ENCODE measurements at regions of chr1 and their contacts with region 1.

Region 1: GRCh38 chr1:27321813-27322577 is at the start of gene TMEM222:
- DNase-seq: peak; percentile 94 to 99 (median 97)
- ATAC-seq: peak; percentile 98
- H3K4me3 ChIP-seq: peak within 1 kb of the TSS; percentile 91
- H3K4me3 Mint-ChIP-seq: peak within 1 kb of the TSS; percentile 91 to 99 (median 96)
- H3K27ac ChIP-seq: peak within 1 kb of the TSS; percentile 95
- H3K27ac Mint-ChIP-seq: peak within 1 kb of the TSS; percentile 88 to 97 (median 93)
- H3K4me1 ChIP-seq: peaks cover 18 to 22% of the 10 kb centered on the region in 2 donors
- H3K4me1 Mint-ChIP-seq: peaks cover 22 to 59% (median 54%) of the 10 kb centered on the region in 7 donors
- H3K27me3 ChIP-seq: no peaks in the 10 kb centered on the region
- H3K27me3 Mint-ChIP-seq: peaks cover 0 to 5% (median 3%) of the 10 kb centered on the region in 5 donors
- total RNA-seq, gene TMEM222: 23.7 to 44.0 (median 41.9) TPM

Region 2: DNA sequence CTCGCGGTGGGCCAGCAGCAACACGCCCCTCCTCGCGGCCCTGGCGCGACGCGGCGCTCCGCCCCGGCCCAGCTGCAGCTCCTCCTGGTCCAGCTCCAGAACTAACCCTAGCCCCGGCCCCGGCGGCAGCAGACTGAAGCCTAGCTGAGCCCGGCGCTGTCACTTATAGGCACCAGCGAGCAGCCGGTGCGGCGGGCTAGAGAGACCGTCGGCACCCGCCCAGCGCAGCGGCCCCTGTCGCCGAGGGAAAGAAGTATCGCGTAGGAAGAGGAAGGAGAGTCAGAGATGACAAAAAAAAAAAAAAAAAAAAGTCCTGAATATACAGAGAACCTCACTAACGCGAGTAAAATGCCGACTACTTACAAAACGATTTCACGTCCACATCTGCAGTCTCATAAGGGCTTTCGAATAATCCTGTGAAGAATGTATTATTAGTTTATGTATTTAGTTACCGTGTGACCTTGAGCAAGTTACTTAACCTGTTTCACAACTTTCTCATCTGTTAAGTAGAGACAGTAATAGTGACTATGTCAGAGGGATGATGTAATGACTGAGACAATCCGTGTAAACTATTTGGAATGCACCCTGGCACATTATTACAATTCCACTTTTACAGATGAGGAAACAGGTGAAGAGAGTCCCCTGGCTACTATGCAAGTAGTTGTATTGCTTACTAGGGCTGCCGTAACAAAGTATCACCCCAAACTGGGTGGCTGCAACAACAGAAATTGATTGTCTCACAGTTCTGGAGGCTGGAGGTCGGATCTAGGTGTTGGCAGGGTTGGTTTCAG is 166.8 kb before region 1 on chr1 and contains the start of gene SLC9A1:
- CTCF ChIA-PET with region 1: interaction called, 3 read pairs
- POLR2A ChIA-PET with region 1: no interaction called
- intact Hi-C with region 1: loop called (anchors 1 kb)
- DNase-seq: peak; percentile 90 to 96 (median 94)
- ATAC-seq: peak; percentile 98
- H3K4me3 ChIP-seq: peak within 1 kb of the TSS; percentile 40
- H3K4me3 Mint-ChIP-seq: peak within 1 kb of the TSS; percentile 82 to 97 (median 90)
- H3K27ac ChIP-seq: peak within 1 kb of the TSS; percentile 90
- H3K27ac Mint-ChIP-seq: peak within 1 kb of the TSS; percentile 96 to 100 (median 99)
- H3K4me1 ChIP-seq: peaks cover 29 to 36% of the 10 kb centered on the region in 2 donors
- H3K4me1 Mint-ChIP-seq: peaks cover 38 to 52% (median 49%) of the 10 kb centered on the region in 7 donors
- H3K27me3 ChIP-seq: no peaks in the 10 kb centered on the region
- H3K27me3 Mint-ChIP-seq: no peaks in the 10 kb centered on the region
- total RNA-seq, gene SLC9A1: 13.2 to 25.7 (median 21.1) TPM

Region 3: GRCh38 chr1:27307874-27308598 is 14.0 kb before region 1 on chr1:
- CTCF ChIA-PET with region 1: no interaction called
- POLR2A ChIA-PET with region 1: interaction called, 10 read pairs
- intact Hi-C with region 1: no loop called
- DNase-seq: no peak
- ATAC-seq: no peak
- H3K4me3 ChIP-seq: no peak overlapping the region
- H3K4me3 Mint-ChIP-seq: no peak overlapping the region
- H3K27ac ChIP-seq: no peak overlapping the region
- H3K27ac Mint-ChIP-seq: peak overlapping the region in 1 of 9 donors; percentile 34
- H3K4me1 ChIP-seq: no peaks in the 10 kb centered on the region
- H3K4me1 Mint-ChIP-seq: peaks cover 0 to 2% (median 0%) of the 10 kb centered on the region in 7 donors
- H3K27me3 ChIP-seq: no peaks in the 10 kb centered on the region
- H3K27me3 Mint-ChIP-seq: peaks cover 0 to 3% (median 0%) of the 10 kb centered on the region in 5 donors

Region 4: DNA sequence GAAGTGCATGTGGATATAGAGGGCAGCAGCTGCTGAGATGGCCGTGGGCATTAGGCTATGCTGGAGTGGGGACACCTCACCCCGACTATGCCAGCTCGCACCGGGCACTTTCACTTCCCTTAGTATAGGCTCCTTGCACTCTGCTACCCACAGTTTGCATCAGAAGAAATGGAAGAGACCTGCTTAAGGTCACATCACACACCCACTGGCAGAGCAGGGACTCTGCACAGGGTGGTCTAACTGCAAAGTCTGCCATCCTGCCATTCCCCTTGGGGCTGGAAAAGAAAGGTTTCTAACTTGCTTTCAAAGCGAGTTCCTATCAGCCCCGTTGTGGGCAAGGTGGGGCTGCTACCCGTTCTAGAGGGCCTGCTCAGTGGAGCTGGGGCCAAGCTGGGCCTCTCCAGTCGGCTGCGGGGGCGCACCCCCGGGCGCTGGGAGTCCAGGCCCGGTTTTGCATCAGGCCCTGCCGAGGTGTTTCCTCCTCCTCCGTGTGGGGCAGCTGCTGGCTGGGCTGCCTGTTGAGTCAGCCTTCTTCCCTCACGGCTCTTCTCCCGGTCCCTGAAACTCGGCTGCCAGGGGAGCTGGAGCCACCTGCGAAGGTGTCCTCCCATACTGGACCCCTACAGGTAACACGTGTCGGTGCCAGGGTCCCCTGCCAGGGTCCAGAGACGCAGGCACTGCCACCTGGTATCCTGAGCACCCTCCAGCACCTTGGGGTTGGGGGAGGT is 19.7 kb after region 1 on chr1 and contains the start of gene SYTL1:
- CTCF ChIA-PET with region 1: interaction called, 6 read pairs
- POLR2A ChIA-PET with region 1: interaction called, 28 read pairs
- intact Hi-C with region 1: loop called (anchors 1 kb)
- DNase-seq: peak; percentile 49 to 72 (median 60)
- ATAC-seq: peak; percentile 74
- H3K4me3 ChIP-seq: peak within 1 kb of the TSS; percentile 85
- H3K4me3 Mint-ChIP-seq: peak within 1 kb of the TSS; percentile 91 to 100 (median 96)
- H3K27ac ChIP-seq: peak within 1 kb of the TSS; percentile 87
- H3K27ac Mint-ChIP-seq: peak within 1 kb of the TSS; percentile 86 to 98 (median 94)
- H3K4me1 ChIP-seq: peaks cover 11 to 29% of the 10 kb centered on the region in 2 donors
- H3K4me1 Mint-ChIP-seq: peaks cover 22 to 68% (median 53%) of the 10 kb centered on the region in 7 donors
- H3K27me3 ChIP-seq: no peaks in the 10 kb centered on the region
- H3K27me3 Mint-ChIP-seq: no peaks in the 10 kb centered on the region
- total RNA-seq, gene SYTL1: 107 to 172 (median 136) TPM

Region 5: GRCh38 chr1:27365372-27366112 is 43.5 kb after region 1 on chr1:
- CTCF ChIA-PET with region 1: interaction called, 3 read pairs
- POLR2A ChIA-PET with region 1: interaction called, 7 read pairs
- intact Hi-C with region 1: loop called (anchors 1 kb)
- DNase-seq: peak; percentile 48 to 77 (median 67)
- ATAC-seq: peak; percentile 78
- H3K4me3 ChIP-seq: peak overlapping the region; percentile 61
- H3K4me3 Mint-ChIP-seq: peak overlapping the region; percentile 74 to 93 (median 88)
- H3K27ac ChIP-seq: peak overlapping the region; percentile 60
- H3K27ac Mint-ChIP-seq: peak overlapping the region; percentile 54 to 90 (median 73)
- H3K4me1 ChIP-seq: peaks cover 13 to 17% of the 10 kb centered on the region in 2 donors
- H3K4me1 Mint-ChIP-seq: peaks cover 21 to 55% (median 42%) of the 10 kb centered on the region in 7 donors
- H3K27me3 ChIP-seq: no peaks in the 10 kb centered on the region
- H3K27me3 Mint-ChIP-seq: no peaks in the 10 kb centered on the region

Region 6: GRCh38 chr1:27489910-27490741 is 168.1 kb after region 1 on chr1 and contains the start of gene WASF2:
- CTCF ChIA-PET with region 1: no interaction called
- POLR2A ChIA-PET with region 1: no interaction called
- intact Hi-C with region 1: loop called in 1 of 2 experiments (anchors 1 kb)
- DNase-seq: peak; percentile 91 to 99 (median 97)
- ATAC-seq: peak; percentile 98
- H3K4me3 ChIP-seq: peak within 1 kb of the TSS; percentile 100
- H3K4me3 Mint-ChIP-seq: peak within 1 kb of the TSS; percentile 89 to 99 (median 96)
- H3K27ac ChIP-seq: peak within 1 kb of the TSS; percentile 88
- H3K27ac Mint-ChIP-seq: peak within 1 kb of the TSS; percentile 97 to 100 (median 99)
- H3K4me1 ChIP-seq: peaks cover 14 to 19% of the 10 kb centered on the region in 2 donors
- H3K4me1 Mint-ChIP-seq: peaks cover 21 to 46% (median 42%) of the 10 kb centered on the region in 7 donors
- H3K27me3 ChIP-seq: no peaks in the 10 kb centered on the region
- H3K27me3 Mint-ChIP-seq: no peaks in the 10 kb centered on the region
- total RNA-seq, gene WASF2: 136 to 177 (median 145) TPM